ENCODE measurements at regions of chr18 and their contacts with region 1.

Region 1: DNA sequence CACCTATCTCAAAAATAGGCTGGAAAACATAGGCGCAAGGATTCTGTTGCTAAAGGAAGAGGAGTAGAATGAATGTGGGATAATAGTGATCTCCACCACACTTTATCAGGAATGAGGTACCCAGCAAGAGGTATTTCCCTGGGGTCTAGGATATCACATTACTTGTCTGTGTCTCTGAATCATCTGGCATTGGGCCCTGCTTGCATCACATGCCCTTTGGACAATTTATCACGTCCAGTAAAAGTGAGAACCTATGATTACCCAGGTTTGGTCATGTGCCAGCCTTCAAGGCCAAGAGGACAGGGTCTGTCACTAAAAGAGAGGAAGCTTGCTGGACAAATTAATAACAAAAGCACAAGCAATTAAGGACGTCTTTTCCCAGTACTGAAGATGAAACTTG is 11.4 kb upstream of the TRAPPC8 start:
- DNase-seq: peak; percentile 39 to 90 (median 83)
- H3K4me3 ChIP-seq: no peak overlapping the region
- H3K27ac ChIP-seq: no peak overlapping the region
- H3K4me1 ChIP-seq: no peaks in the 10 kb centered on the region
- H3K27me3 ChIP-seq: no peaks in the 10 kb centered on the region
- CTCF ChIP-seq: no peak
- POLR2A ChIP-seq: no peak

Region 2: GRCh38 chr18:31546476-31546875 is 407.9 kb before region 1 on chr18:
- intact Hi-C with region 1: loop called in 1 of 2 experiments (anchors 10 kb)
- DNase-seq: no peak
- H3K4me3 ChIP-seq: no peak overlapping the region
- H3K27ac ChIP-seq: no peak overlapping the region
- H3K4me1 ChIP-seq: no peaks in the 10 kb centered on the region
- H3K27me3 ChIP-seq: no peaks in the 10 kb centered on the region
- CTCF ChIP-seq: no peak
- POLR2A ChIP-seq: no peak

Region 3: DNA sequence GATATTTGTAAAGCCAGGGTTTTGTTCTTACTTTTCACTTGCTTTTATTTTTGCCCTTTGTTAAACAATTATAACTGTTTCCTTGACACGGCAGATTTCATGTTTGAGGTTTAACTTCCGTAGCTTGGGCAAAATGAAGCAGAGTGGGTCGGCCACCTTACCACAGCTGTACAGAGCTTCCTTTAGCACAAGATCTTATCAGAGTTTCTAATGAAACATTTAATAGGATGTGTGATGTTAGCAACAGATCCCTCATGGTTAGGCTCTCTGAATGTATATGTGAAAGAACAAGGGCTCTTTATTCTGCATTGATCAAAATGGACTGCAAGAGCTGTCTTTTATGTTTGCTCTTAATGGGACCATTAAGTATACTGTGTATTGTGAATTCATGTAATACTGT is 86.6 kb after region 1 on chr18:
- intact Hi-C with region 1: no loop called
- DNase-seq: no peak
- H3K4me3 ChIP-seq: no peak overlapping the region
- H3K27ac ChIP-seq: no peak overlapping the region
- H3K4me1 ChIP-seq: no peaks in the 10 kb centered on the region
- H3K27me3 ChIP-seq: no peaks in the 10 kb centered on the region
- CTCF ChIP-seq: no peak
- POLR2A ChIP-seq: no peak

Measured in adrenal gland (tissue), 19 donors.